Activated CD8-positive, alpha-beta T cell treated with anti-CD3 and anti-CD28 coated beads, Interleukin-2, amount 10 ng/mL, durations not matched to agents 7 days and 5 days (primary cell): ENCODE measurements at regions of chr6 and their contacts with region 1.

Region 1: GRCh38 chr6:44475779-44476434 is 88.4 kb downstream of the CDC5L start:
- DNase-seq: peak; percentile 75
- ATAC-seq: peak; percentile 90
- H3K4me3 Mint-ChIP-seq: no peak overlapping the region
- H3K27ac Mint-ChIP-seq: no peak overlapping the region
- H3K4me1 Mint-ChIP-seq: peaks cover 5% of the 10 kb centered on the region
- H3K27me3 Mint-ChIP-seq: peaks cover 6% of the 10 kb centered on the region

Region 2: GRCh38 chr6:44456070-44456965 is 19.6 kb before region 1 on chr6:
- CTCF ChIA-PET with region 1: interaction called, 52 read pairs
- POLR2A ChIA-PET with region 1: no interaction called
- DNase-seq: peak; percentile 54
- ATAC-seq: peak; percentile 81
- H3K4me3 Mint-ChIP-seq: no peak overlapping the region
- H3K27ac Mint-ChIP-seq: no peak overlapping the region
- H3K4me1 Mint-ChIP-seq: peaks cover 3% of the 10 kb centered on the region
- H3K27me3 Mint-ChIP-seq: peaks cover 6% of the 10 kb centered on the region

Region 3: GRCh38 chr6:44593539-44593944 is 117.6 kb after region 1 on chr6:
- CTCF ChIA-PET with region 1: interaction called, 13 read pairs
- POLR2A ChIA-PET with region 1: no interaction called
- DNase-seq: peak; percentile 76
- ATAC-seq: peak; percentile 70
- H3K4me3 Mint-ChIP-seq: no peak overlapping the region
- H3K27ac Mint-ChIP-seq: no peak overlapping the region
- H3K4me1 Mint-ChIP-seq: peaks cover 2% of the 10 kb centered on the region
- H3K27me3 Mint-ChIP-seq: peaks cover 9% of the 10 kb centered on the region

Region 4: GRCh38 chr6:44630125-44631028 is 154.5 kb after region 1 on chr6:
- CTCF ChIA-PET with region 1: interaction called, 14 read pairs
- POLR2A ChIA-PET with region 1: no interaction called
- DNase-seq: peak; percentile 40
- ATAC-seq: peak; percentile 67
- H3K4me3 Mint-ChIP-seq: no peak overlapping the region
- H3K27ac Mint-ChIP-seq: no peak overlapping the region
- H3K4me1 Mint-ChIP-seq: peaks cover 7% of the 10 kb centered on the region
- H3K27me3 Mint-ChIP-seq: peaks cover 8% of the 10 kb centered on the region

Region 5: DNA sequence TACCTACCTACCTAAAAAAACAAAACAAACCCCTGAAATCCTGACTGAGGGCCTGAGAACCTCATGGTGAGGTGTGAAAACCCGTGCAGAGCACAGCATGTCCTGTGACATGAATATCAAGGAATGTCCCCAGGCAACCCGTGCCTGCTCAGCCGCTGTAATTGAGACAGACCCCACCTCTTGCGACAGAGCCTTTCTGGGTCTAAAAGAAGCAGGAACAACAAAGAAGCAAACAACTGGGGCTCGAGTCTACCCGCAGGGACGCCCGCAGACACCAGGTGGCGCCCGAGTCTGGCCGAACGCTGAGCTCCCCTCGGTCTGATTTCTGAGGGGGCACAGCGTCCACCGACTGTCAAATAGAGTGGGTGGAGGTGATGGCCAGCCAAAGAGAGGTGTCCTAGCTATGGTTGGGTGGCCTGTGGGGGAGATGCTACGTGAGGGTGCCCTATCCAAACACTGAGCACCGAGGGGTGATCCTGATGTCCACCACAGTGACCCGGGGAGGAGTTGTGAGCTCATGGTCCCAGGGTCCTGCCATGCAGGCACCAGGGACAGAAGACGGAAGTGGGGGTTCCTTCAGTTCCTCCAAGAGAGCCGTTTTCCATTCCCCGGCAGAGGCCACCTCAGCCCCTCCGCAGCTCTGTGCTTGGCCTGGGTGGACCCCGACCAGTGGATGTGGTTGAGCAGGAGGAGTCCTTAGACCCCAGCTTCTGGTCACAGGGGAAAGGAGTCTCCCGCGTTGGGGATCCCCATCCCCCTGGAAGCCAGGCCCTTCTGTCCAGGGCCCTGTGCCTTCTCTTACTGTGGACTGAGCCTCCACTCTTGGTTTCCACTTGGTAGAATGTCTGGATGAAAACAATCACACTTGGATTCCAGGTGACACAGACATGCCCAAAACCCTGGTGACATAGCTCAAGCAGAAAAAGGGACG is 179.8 kb after region 1 on chr6:
- CTCF ChIA-PET with region 1: interaction called, 26 read pairs
- POLR2A ChIA-PET with region 1: no interaction called
- DNase-seq: peak; percentile 82
- ATAC-seq: peak; percentile 81
- H3K4me3 Mint-ChIP-seq: peak overlapping the region; percentile 48
- H3K27ac Mint-ChIP-seq: peak overlapping the region; percentile 69
- H3K4me1 Mint-ChIP-seq: peaks cover 7% of the 10 kb centered on the region
- H3K27me3 Mint-ChIP-seq: peaks cover 7% of the 10 kb centered on the region